Activated CD4-positive, alpha-beta T cell treated with anti-CD3 and anti-CD28 coated beads, Interleukin-2, amount 10 ng/mL, durations not matched to agents 24 days and 14 days (primary cell): ENCODE measurements at regions of chr21 and their contacts with region 1.

Region 1: DNA sequence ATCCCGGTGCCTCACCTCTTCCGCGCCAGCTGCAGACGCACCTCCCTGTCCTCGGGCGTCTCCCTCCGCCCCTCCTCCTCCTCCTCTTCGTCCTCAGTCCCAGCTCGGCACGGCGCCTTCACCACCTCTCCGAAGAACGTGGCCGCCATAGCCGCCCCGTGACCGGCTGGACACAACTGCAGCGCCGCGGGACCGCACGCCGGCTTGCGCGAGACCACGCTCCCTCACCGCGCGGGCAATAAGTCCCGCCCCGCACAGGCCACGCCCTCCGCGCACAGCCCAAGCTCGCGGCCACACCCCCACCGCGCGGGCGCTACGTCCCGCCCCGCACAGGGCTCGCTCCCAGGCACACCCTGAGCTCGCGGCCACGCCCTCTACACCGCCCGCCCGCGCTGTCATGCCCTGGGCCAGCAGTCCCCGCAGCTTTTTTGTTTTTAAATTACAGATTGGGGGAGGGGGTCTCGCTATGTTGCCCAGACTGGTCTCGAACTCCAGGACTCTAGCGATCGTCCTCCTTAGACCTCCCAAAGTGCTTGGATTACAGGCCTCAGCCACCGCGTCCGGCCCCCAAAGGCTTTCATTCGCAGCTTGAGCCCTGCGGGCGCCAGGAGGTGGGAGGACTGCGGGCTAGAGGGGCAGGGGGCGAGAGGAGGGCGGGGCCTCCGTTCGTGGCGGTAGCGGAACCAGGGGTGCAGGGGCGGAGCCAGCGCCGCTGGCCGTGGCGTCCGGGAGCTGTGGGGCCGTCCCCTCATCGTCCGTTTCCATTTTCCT is at the start of gene PSMG1:
- DNase-seq: peak; percentile 98
- H3K4me3 Mint-ChIP-seq: peak within 1 kb of the TSS; percentile 99
- H3K27ac Mint-ChIP-seq: peak within 1 kb of the TSS; percentile 98
- H3K4me1 Mint-ChIP-seq: peaks cover 47% of the 10 kb centered on the region
- H3K27me3 Mint-ChIP-seq: no peaks in the 10 kb centered on the region
- total RNA-seq, gene PSMG1: 99.7 and 105 TPM in 2 replicates

Region 2: GRCh38 chr21:37563641-37564340 is 1619.6 kb before region 1 on chr21:
- intact Hi-C with region 1: loop called (anchors 5 kb)
- DNase-seq: peak; percentile 98
- H3K4me3 Mint-ChIP-seq: peak overlapping the region; percentile 94
- H3K27ac Mint-ChIP-seq: peak overlapping the region; percentile 100
- H3K4me1 Mint-ChIP-seq: peaks cover 23% of the 10 kb centered on the region
- H3K27me3 Mint-ChIP-seq: peaks cover 9% of the 10 kb centered on the region

Region 3: DNA sequence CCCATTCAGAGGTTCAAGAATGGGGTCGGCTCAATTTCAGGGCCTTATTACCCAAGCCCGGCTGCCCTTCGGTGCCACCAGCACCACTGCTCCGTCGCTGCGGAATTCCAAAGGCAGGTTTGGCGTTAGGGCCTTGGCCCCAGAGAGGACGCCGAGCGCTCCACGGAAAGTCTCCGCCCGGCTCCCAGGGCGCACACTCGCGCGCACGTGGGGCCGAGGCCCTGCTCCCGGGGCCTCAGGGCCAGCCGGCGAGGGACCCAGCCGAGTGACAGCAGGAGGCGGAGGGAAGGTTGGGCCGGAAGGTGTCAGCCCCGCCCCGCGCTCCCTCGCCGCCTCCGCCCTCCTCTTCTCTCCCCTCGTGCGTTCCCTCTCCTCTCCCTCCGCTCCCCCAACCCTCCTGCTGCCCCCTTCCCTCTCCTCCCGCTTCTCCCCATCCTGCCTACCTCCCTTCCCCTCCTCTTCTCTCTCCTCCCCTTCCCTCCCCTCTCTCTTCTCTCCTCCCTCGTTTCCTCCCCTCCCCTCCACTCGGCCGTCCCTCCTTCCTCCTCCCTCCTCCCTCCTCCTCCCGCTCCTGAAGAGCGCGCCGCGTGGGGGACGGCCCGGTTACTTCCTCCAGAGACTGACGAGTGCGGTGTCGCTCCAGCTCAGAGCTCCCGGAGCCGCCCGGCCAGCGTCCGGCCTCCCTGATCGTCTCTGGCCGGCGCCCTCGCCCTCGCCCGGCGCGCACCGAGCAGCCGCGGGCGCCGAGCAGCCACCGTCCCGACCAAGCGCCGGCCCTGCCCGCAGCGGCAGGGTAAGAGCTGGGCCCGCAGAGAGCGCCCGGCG is 377.9 kb before region 1 on chr21 and contains the start of gene ETS2:
- intact Hi-C with region 1: loop called (anchors 2 kb)
- DNase-seq: peak; percentile 93
- H3K4me3 Mint-ChIP-seq: peak within 1 kb of the TSS; percentile 86
- H3K27ac Mint-ChIP-seq: peak within 1 kb of the TSS; percentile 95
- H3K4me1 Mint-ChIP-seq: peaks cover 29% of the 10 kb centered on the region
- H3K27me3 Mint-ChIP-seq: peaks cover 6% of the 10 kb centered on the region
- total RNA-seq, gene ETS2: 28.6 and 30.4 TPM in 2 replicates

Region 4: GRCh38 chr21:39313571-39314142 is 130.2 kb after region 1 on chr21 and contains the start of gene BRWD1:
- intact Hi-C with region 1: loop called (anchors 2 kb)
- DNase-seq: peak; percentile 94
- H3K4me3 Mint-ChIP-seq: peak within 1 kb of the TSS; percentile 97
- H3K27ac Mint-ChIP-seq: peak within 1 kb of the TSS; percentile 98
- H3K4me1 Mint-ChIP-seq: peaks cover 32% of the 10 kb centered on the region
- H3K27me3 Mint-ChIP-seq: no peaks in the 10 kb centered on the region
- total RNA-seq, gene BRWD1: 29.7 and 31.9 TPM in 2 replicates

Region 5: DNA sequence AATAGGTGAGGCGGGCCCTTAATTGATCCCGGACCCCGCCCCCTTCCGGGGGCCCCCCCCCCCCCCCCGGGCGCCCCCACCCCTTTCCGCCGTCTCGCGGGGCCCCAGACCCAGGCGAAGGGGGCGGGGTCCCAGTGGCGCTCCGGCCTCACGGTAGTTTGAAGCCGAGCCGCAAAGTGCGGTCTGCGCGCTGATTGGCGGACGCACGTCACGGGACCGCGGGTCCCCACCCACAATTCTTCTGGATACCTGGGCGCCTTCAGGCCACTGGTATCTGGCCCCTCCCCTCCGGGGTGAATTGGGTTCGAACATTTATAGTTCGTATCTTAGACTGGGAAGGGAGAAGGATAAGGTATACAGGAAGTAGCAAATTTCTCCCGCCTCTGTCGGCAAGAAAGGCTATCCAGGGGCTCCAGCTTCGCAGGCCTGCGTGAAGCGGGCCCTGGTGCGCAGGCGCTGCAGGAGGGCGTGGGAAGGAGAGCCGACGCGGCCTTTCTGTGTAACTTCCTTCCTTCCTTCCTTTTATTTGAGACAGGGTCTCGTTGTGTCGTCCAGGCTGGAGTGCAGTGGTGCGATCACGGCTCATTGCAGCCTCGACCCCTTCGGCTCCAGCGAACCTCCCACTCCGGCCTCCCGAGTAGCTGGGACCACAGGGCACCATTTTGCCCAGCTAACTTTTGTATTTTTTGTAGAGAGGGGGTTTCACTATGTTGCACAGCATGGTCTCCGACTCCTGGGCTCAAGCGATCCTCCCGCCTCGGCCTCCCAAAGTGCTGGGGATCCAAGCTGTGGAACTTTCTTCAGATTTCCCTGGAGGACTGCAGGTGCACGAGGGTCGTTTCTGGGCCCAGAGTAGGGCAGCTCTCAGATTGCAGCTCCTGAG is 166.0 kb after region 1 on chr21:
- intact Hi-C with region 1: loop called (anchors 1 kb)
- DNase-seq: peak; percentile 99
- H3K4me3 Mint-ChIP-seq: peak overlapping the region; percentile 99
- H3K27ac Mint-ChIP-seq: peak overlapping the region; percentile 99
- H3K4me1 Mint-ChIP-seq: peaks cover 33% of the 10 kb centered on the region
- H3K27me3 Mint-ChIP-seq: peaks cover 4% of the 10 kb centered on the region

Region 6: GRCh38 chr21:39388038-39388810 is 204.8 kb after region 1 on chr21:
- intact Hi-C with region 1: loop called (anchors 2 kb)
- DNase-seq: peak; percentile 96
- H3K4me3 Mint-ChIP-seq: peak overlapping the region; percentile 87
- H3K27ac Mint-ChIP-seq: peak overlapping the region; percentile 91
- H3K4me1 Mint-ChIP-seq: peaks cover 20% of the 10 kb centered on the region
- H3K27me3 Mint-ChIP-seq: no peaks in the 10 kb centered on the region

Region 7: GRCh38 chr21:39445321-39446269 is 262.2 kb after region 1 on chr21 and contains the start of gene LCA5L:
- intact Hi-C with region 1: loop called (anchors 5 kb)
- DNase-seq: peak; percentile 98
- H3K4me3 Mint-ChIP-seq: peak within 1 kb of the TSS; percentile 84
- H3K27ac Mint-ChIP-seq: peak within 1 kb of the TSS; percentile 96
- H3K4me1 Mint-ChIP-seq: peaks cover 14% of the 10 kb centered on the region
- H3K27me3 Mint-ChIP-seq: peaks cover 47% of the 10 kb centered on the region
- total RNA-seq, gene LCA5L: not detected in 2 replicates